ENCODE measurements at regions of chr1 and their contacts with region 1.

Region 1: GRCh38 chr1:154558575-154559465 is at the start of gene UBE2Q1:
- DNase-seq: peak; percentile 99 to 100 (median 100)
- H3K4me3 ChIP-seq: peak within 1 kb of the TSS; percentile 83 to 84
- H3K4me3 Mint-ChIP-seq: peak within 1 kb of the TSS; percentile 91 to 97 (median 94)
- H3K27ac ChIP-seq: peak within 1 kb of the TSS; percentile 82
- H3K27ac Mint-ChIP-seq: peak within 1 kb of the TSS; percentile 85 to 96 (median 94)
- H3K4me1 ChIP-seq: peaks cover 38% of the 10 kb centered on the region
- H3K4me1 Mint-ChIP-seq: peaks cover 22 to 45% (median 38%) of the 10 kb centered on the region in 4 donors
- H3K27me3 ChIP-seq: no peaks in the 10 kb centered on the region
- H3K27me3 Mint-ChIP-seq: no peaks in the 10 kb centered on the region
- total RNA-seq, gene UBE2Q1: 112 to 132 TPM

Region 2: GRCh38 chr1:154272217-154272998 is 286.4 kb before region 1 on chr1 and contains the start of gene HAX1:
- CTCF ChIA-PET with region 1: interaction called, 4 read pairs
- POLR2A ChIA-PET with region 1: no interaction called
- intact Hi-C with region 1: loop called (anchors 2 kb)
- DNase-seq: peak; percentile 93 to 99 (median 98)
- H3K4me3 ChIP-seq: peak within 1 kb of the TSS; percentile 66 to 85
- H3K4me3 Mint-ChIP-seq: peak within 1 kb of the TSS; percentile 89 to 98 (median 97)
- H3K27ac ChIP-seq: peak within 1 kb of the TSS; percentile 88
- H3K27ac Mint-ChIP-seq: peak within 1 kb of the TSS; percentile 97 to 99 (median 99)
- H3K4me1 ChIP-seq: peaks cover 27% of the 10 kb centered on the region
- H3K4me1 Mint-ChIP-seq: peaks cover 22 to 38% (median 29%) of the 10 kb centered on the region in 4 donors
- H3K27me3 ChIP-seq: no peaks in the 10 kb centered on the region
- H3K27me3 Mint-ChIP-seq: no peaks in the 10 kb centered on the region
- total RNA-seq, gene HAX1: 110 to 121 TPM

Region 3: DNA sequence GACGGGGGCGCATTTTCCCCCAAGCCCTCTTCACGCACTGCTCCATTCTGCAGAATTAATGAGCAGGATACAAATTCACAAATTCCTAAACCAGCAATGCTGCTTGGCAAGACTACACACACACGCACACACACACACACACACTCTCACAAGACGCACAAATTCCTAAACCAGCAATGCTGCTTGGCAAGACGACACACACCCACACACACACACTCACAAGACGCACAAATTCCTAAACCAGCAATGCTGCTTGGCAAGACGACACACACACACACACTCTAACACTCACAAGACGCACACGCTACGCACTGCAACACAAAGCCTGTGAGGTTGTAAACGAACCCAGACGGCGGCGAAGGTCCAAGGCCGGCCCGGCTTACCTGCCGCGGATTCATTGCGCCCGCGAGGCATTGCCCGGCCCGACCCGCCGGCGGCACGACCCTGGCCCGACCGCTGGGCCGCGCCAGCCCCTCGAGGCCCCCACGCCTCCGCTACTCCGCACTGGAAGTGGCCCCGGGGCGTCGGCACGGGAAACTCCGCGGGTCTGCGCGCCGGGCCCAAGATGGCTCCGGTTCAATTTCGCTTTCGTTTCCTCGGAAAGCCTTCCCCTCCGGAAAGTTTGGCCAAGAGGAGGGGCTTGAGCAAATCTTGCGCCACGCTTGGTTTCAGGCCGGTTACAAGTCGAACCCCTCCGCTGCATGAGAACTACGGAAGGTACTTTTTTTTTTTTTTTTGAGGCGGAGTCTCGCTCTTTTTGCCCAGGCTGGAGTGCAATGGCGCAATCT is 49.0 kb after region 1 on chr1 and contains the start of gene ADAR:
- CTCF ChIA-PET with region 1: interaction called, 11 read pairs
- POLR2A ChIA-PET with region 1: interaction called, 7 read pairs
- intact Hi-C with region 1: loop called (anchors 1 kb)
- DNase-seq: peak; percentile 89 to 96 (median 93)
- H3K4me3 ChIP-seq: peak within 1 kb of the TSS; percentile 80 to 94
- H3K4me3 Mint-ChIP-seq: peak within 1 kb of the TSS; percentile 93 to 99 (median 98)
- H3K27ac ChIP-seq: peak within 1 kb of the TSS; percentile 97
- H3K27ac Mint-ChIP-seq: peak within 1 kb of the TSS; percentile 93 to 100 (median 98)
- H3K4me1 ChIP-seq: peaks cover 58% of the 10 kb centered on the region
- H3K4me1 Mint-ChIP-seq: peaks cover 51 to 87% (median 63%) of the 10 kb centered on the region in 4 donors
- H3K27me3 ChIP-seq: no peaks in the 10 kb centered on the region
- H3K27me3 Mint-ChIP-seq: no peaks in the 10 kb centered on the region
- total RNA-seq, gene ADAR: 240 to 247 TPM

Region 4: GRCh38 chr1:154760469-154760933 is 201.7 kb after region 1 on chr1:
- CTCF ChIA-PET with region 1: interaction called, 56 read pairs
- POLR2A ChIA-PET with region 1: interaction called, 9 read pairs
- intact Hi-C with region 1: loop called (anchors 1 kb)
- DNase-seq: peak; percentile 76 to 85 (median 79)
- H3K4me3 ChIP-seq: no peak overlapping the region
- H3K4me3 Mint-ChIP-seq: peak overlapping the region; percentile 50 to 75 (median 66)
- H3K27ac ChIP-seq: no peak overlapping the region
- H3K27ac Mint-ChIP-seq: no peak overlapping the region
- H3K4me1 ChIP-seq: peaks cover 16% of the 10 kb centered on the region
- H3K4me1 Mint-ChIP-seq: peaks cover 9 to 19% (median 15%) of the 10 kb centered on the region in 4 donors
- H3K27me3 ChIP-seq: no peaks in the 10 kb centered on the region
- H3K27me3 Mint-ChIP-seq: peaks cover 0 to 7% of the 10 kb centered on the region in 2 donors

Region 5: GRCh38 chr1:154936555-154937084 is 377.8 kb after region 1 on chr1 and contains the start of gene PMVK:
- CTCF ChIA-PET with region 1: interaction called, 21 read pairs
- POLR2A ChIA-PET with region 1: interaction called, 12 read pairs
- intact Hi-C with region 1: loop called (anchors 1 kb)
- DNase-seq: peak; percentile 98 to 99 (median 98)
- H3K4me3 ChIP-seq: peak within 1 kb of the TSS; percentile 51 to 93
- H3K4me3 Mint-ChIP-seq: peak within 1 kb of the TSS; percentile 93 to 99 (median 97)
- H3K27ac ChIP-seq: peak within 1 kb of the TSS; percentile 96
- H3K27ac Mint-ChIP-seq: peak within 1 kb of the TSS; percentile 97 to 100 (median 99)
- H3K4me1 ChIP-seq: peaks cover 54% of the 10 kb centered on the region
- H3K4me1 Mint-ChIP-seq: peaks cover 36 to 70% (median 58%) of the 10 kb centered on the region in 4 donors
- H3K27me3 ChIP-seq: no peaks in the 10 kb centered on the region
- H3K27me3 Mint-ChIP-seq: no peaks in the 10 kb centered on the region
- total RNA-seq, gene PMVK: 17.6 to 21.2 TPM

Region 6: GRCh38 chr1:155050560-155051341 is 491.9 kb after region 1 on chr1 and contains the start of gene ADAM15:
- CTCF ChIA-PET with region 1: no interaction called
- POLR2A ChIA-PET with region 1: interaction called, 4 read pairs
- intact Hi-C with region 1: loop called (anchors 1 kb)
- DNase-seq: peak; percentile 74 to 79 (median 77)
- H3K4me3 ChIP-seq: peak within 1 kb of the TSS; percentile 69 to 92
- H3K4me3 Mint-ChIP-seq: peak within 1 kb of the TSS; percentile 86 to 92 (median 88)
- H3K27ac ChIP-seq: peak within 1 kb of the TSS; percentile 71
- H3K27ac Mint-ChIP-seq: peak within 1 kb of the TSS; percentile 70 to 93 (median 90)
- H3K4me1 ChIP-seq: peaks cover 27% of the 10 kb centered on the region
- H3K4me1 Mint-ChIP-seq: peaks cover 14 to 33% (median 27%) of the 10 kb centered on the region in 4 donors
- H3K27me3 ChIP-seq: no peaks in the 10 kb centered on the region
- H3K27me3 Mint-ChIP-seq: no peaks in the 10 kb centered on the region
- total RNA-seq, gene ADAM15: 33.6 to 39.8 TPM